CD4-positive, alpha-beta memory T cell (primary cell): ENCODE measurements at regions of chr13 and their contacts with region 1.

Region 1: GRCh38 chr13:30465585-30466357 is at the start of gene HMGB1:
- DNase-seq: peak; percentile 96 to 98 (median 96)
- H3K4me3 ChIP-seq: peak within 1 kb of the TSS; percentile 69 to 80
- H3K4me3 Mint-ChIP-seq: peak within 1 kb of the TSS; percentile 93 to 98 (median 95)
- H3K27ac ChIP-seq: peak within 1 kb of the TSS; percentile 90
- H3K27ac Mint-ChIP-seq: peak within 1 kb of the TSS; percentile 97 to 99 (median 99)
- H3K4me1 ChIP-seq: peaks cover 33% of the 10 kb centered on the region
- H3K4me1 Mint-ChIP-seq: peaks cover 15 to 52% (median 24%) of the 10 kb centered on the region in 4 donors
- H3K27me3 ChIP-seq: no peaks in the 10 kb centered on the region
- H3K27me3 Mint-ChIP-seq: peaks cover 2 to 3% of the 10 kb centered on the region in 2 donors
- total RNA-seq, gene HMGB1: 311 to 331 TPM

Region 2: DNA sequence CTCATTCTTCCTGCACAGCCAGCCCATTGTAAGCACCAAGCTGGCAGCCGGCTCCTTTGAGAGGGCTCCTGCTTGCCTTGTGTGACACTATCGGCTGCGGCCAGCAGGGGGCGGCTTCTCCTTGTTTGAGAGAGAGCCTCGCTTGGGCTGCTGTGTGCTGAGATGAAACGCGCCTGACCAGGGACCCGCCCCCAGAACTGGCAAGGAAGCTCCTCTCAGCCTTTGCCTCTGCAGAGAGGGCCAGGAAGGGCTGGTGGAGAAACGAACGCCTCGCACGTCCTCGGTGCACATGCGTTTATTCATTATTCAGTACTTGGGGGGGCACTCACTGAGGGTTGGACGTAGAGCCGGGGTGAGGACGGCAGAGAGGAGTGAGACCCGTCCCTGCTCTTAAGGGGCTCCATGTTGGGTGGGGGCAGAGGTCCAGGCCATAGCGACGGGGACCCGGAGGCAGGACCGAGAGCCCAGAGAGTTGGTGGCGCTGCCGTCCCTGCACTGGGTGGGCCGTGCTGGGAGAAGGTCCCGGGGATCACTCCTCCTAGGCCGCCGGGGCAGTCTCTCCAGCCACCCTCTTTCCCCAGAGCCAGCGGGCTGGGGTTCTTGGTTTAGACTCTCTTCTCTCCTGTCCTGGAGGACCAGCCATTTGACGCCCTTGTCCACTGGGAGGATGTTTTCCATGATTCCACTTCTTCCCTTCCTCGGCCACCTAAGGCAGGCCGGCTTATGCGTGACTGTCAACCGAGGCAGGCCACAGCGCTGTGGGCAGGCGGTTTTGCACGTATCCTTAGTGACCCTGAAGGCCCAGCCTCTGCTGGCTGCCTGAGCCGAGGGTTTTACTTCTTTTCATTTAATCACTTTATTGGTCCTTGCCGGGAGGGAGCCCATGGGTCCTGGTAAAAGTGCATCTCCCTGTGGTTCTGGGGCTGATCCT is 332.9 kb before region 1 on chr13:
- CTCF ChIA-PET with region 1: interaction called, 35 read pairs
- POLR2A ChIA-PET with region 1: interaction called, 18 read pairs
- intact Hi-C with region 1: loop called (anchors 1 kb)
- DNase-seq: peak; percentile 91 to 95 (median 93)
- H3K4me3 ChIP-seq: no peak overlapping the region
- H3K4me3 Mint-ChIP-seq: peak overlapping the region in 6 of 8 donors; percentile 17 to 78 (median 63)
- H3K27ac ChIP-seq: no peak overlapping the region
- H3K27ac Mint-ChIP-seq: peak overlapping the region in 6 of 7 donors; percentile 22 to 88 (median 82)
- H3K4me1 ChIP-seq: peaks cover 12% of the 10 kb centered on the region
- H3K4me1 Mint-ChIP-seq: peaks cover 10 to 19% (median 14%) of the 10 kb centered on the region in 4 donors
- H3K27me3 ChIP-seq: no peaks in the 10 kb centered on the region
- H3K27me3 Mint-ChIP-seq: no peaks in the 10 kb centered on the region

Region 3: DNA sequence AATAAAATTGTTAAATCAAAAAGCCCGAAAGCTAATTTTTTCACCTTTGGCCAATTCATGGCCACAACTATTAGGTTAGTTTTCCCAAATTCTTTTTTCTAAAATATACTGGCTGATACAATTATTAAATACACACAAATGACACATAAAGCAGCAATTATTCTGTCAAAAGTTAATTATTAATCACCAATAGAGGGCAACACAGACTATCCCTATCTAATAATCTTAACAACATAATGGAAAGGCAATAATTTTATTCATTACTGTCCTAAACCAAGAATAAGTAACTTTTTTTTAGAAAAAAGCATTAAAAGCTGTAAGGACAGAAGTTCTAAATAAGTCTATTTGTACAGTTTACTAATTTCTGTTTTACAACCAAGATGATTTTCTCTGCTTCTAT is 210.1 kb before region 1 on chr13:
- CTCF ChIA-PET with region 1: interaction called, 7 read pairs
- POLR2A ChIA-PET with region 1: no interaction called
- intact Hi-C with region 1: loop called (anchors 2 kb)
- DNase-seq: peak in 3 of 5 donors; percentile 6 to 14 (median 9)
- H3K4me3 ChIP-seq: no peak overlapping the region
- H3K4me3 Mint-ChIP-seq: no peak overlapping the region
- H3K27ac ChIP-seq: no peak overlapping the region
- H3K27ac Mint-ChIP-seq: no peak overlapping the region
- H3K4me1 ChIP-seq: no peaks in the 10 kb centered on the region
- H3K4me1 Mint-ChIP-seq: peaks cover 4 to 21% (median 11%) of the 10 kb centered on the region in 4 donors
- H3K27me3 ChIP-seq: no peaks in the 10 kb centered on the region
- H3K27me3 Mint-ChIP-seq: no peaks in the 10 kb centered on the region

Region 4: GRCh38 chr13:30371649-30372265 is 94.0 kb before region 1 on chr13:
- CTCF ChIA-PET with region 1: interaction called, 45 read pairs
- POLR2A ChIA-PET with region 1: interaction called, 115 read pairs
- intact Hi-C with region 1: loop called (anchors 1 kb)
- DNase-seq: peak; percentile 83 to 93 (median 88)
- H3K4me3 ChIP-seq: peak overlapping the region in 1 of 2 donors; percentile 41
- H3K4me3 Mint-ChIP-seq: peak overlapping the region; percentile 66 to 95 (median 87)
- H3K27ac ChIP-seq: peak overlapping the region; percentile 43
- H3K27ac Mint-ChIP-seq: peak overlapping the region; percentile 94 to 99 (median 98)
- H3K4me1 ChIP-seq: peaks cover 90% of the 10 kb centered on the region
- H3K4me1 Mint-ChIP-seq: peaks cover 66 to 92% (median 80%) of the 10 kb centered on the region in 4 donors
- H3K27me3 ChIP-seq: no peaks in the 10 kb centered on the region
- H3K27me3 Mint-ChIP-seq: peaks cover 0 to 3% of the 10 kb centered on the region in 2 donors

Region 5: GRCh38 chr13:30551189-30551588 is 85.4 kb after region 1 on chr13:
- CTCF ChIA-PET with region 1: interaction called, 3 read pairs
- POLR2A ChIA-PET with region 1: no interaction called
- intact Hi-C with region 1: loop called (anchors 1 kb)
- DNase-seq: peak in 4 of 5 donors; percentile 19 to 21 (median 20)
- H3K4me3 ChIP-seq: no peak overlapping the region
- H3K4me3 Mint-ChIP-seq: no peak overlapping the region
- H3K27ac ChIP-seq: no peak overlapping the region
- H3K27ac Mint-ChIP-seq: no peak overlapping the region
- H3K4me1 ChIP-seq: no peaks in the 10 kb centered on the region
- H3K4me1 Mint-ChIP-seq: peaks cover 0 to 3% (median under 1%) of the 10 kb centered on the region in 4 donors
- H3K27me3 ChIP-seq: no peaks in the 10 kb centered on the region
- H3K27me3 Mint-ChIP-seq: no peaks in the 10 kb centered on the region

Region 6: DNA sequence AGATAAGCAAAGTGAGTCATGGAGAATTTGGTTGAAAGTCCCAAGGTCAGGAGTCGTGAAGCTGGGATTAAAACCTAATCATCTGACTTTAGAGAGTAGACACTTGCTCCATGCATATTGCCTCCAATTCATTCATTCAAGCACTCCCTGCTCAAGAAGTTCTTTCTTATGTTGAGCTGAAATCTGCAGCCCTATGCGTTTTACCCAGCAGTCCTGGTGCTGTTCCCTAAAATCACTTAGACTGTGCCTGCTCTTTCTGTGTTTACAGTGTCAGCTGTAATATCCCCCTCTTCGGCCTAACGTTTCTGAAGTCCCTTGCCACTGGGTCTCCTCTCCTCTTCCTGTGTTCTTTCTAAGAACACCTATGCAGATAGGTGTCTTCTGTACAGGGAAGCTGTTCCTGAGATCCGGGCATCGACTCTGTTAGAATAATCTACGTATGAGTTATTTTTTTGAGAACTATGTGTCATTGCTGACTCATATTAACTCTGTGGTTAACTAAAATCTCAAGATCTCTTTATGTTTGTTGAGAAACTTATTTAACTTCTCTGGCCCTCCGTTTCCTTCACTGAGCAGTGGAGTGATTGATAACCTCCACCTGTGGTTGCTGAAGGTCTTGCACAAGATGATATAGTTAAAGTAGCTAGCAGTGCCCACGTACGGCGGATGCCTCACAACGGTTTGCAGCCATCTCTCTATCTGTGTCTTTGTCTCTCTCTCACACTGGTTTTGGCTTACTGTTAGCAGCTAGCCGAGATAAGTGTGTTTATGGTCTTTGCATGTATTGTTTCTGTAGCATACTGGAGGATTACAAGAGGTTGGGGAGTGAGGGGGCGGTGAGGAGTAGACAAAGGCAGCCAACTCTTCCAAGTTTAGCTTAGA is 274.2 kb after region 1 on chr13:
- CTCF ChIA-PET with region 1: no interaction called
- POLR2A ChIA-PET with region 1: interaction called, 3 read pairs
- intact Hi-C with region 1: loop called (anchors 2 kb)
- DNase-seq: peak; percentile 63 to 86 (median 69)
- H3K4me3 ChIP-seq: peak overlapping the region; percentile 2 to 46
- H3K4me3 Mint-ChIP-seq: peak overlapping the region; percentile 80 to 98 (median 86)
- H3K27ac ChIP-seq: peak overlapping the region; percentile 47
- H3K27ac Mint-ChIP-seq: peak overlapping the region; percentile 81 to 96 (median 91)
- H3K4me1 ChIP-seq: peaks cover 84% of the 10 kb centered on the region
- H3K4me1 Mint-ChIP-seq: peaks cover 60 to 90% (median 76%) of the 10 kb centered on the region in 4 donors
- H3K27me3 ChIP-seq: no peaks in the 10 kb centered on the region
- H3K27me3 Mint-ChIP-seq: no peaks in the 10 kb centered on the region